ENCODE measurements at regions of chr6 and their contacts with region 1.

Region 1: DNA sequence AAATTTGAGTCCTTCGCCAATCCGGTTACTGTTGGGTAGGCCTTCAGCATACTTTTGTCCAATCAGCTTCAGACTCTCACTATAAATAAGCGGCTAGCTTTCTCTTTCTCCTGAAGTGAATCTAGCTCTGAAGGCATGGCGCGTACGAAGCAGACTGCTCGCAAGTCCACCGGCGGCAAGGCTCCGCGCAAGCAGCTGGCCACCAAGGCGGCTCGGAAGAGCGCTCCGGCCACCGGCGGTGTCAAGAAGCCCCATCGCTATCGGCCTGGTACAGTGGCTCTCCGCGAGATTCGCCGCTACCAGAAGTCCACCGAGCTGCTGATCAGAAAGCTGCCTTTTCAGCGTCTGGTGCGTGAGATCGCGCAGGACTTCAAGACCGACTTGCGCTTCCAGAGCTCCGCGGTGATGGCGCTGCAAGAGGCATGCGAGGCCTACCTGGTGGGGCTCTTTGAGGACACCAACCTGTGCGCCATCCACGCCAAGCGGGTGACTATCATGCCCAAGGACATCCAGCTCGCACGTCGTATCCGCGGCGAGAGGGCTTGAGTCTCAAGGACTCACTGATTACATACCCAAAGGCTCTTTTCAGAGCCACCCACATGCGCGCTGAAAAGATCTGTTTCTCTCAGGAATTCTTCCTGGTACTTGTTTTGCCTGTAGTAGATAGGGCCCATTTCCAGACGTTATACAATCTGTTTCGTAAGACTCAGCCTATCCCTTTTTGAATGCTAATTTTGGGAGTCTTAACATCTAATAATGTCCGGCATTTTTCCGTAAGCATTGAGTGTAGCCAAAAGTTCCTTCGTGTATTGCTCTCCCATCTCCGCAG is 102.0 kb downstream of the OR2B2 start:
- DNase-seq: peak in 1 of 2 experiments; percentile 78
- H3K4me3 ChIP-seq: peak overlapping the region; percentile 78 to 96 (median 89)
- H3K27ac ChIP-seq: peak overlapping the region; percentile 84
- H3K4me1 ChIP-seq: peaks cover 0 to 6% (median 3%) of the 10 kb centered on the region in 4 experiments; a peak in 4 of 7 replicates
- H3K27me3 ChIP-seq: no peaks in the 10 kb centered on the region
- CTCF ChIP-seq: peak in 1 of 3 experiments; percentile 6; a peak in 1 of 4 replicates
- EP300 ChIP-seq: no peak
- POLR2A ChIP-seq: peak; percentile 98 to 100
- RAD21 ChIP-seq: no peak

Region 2: DNA sequence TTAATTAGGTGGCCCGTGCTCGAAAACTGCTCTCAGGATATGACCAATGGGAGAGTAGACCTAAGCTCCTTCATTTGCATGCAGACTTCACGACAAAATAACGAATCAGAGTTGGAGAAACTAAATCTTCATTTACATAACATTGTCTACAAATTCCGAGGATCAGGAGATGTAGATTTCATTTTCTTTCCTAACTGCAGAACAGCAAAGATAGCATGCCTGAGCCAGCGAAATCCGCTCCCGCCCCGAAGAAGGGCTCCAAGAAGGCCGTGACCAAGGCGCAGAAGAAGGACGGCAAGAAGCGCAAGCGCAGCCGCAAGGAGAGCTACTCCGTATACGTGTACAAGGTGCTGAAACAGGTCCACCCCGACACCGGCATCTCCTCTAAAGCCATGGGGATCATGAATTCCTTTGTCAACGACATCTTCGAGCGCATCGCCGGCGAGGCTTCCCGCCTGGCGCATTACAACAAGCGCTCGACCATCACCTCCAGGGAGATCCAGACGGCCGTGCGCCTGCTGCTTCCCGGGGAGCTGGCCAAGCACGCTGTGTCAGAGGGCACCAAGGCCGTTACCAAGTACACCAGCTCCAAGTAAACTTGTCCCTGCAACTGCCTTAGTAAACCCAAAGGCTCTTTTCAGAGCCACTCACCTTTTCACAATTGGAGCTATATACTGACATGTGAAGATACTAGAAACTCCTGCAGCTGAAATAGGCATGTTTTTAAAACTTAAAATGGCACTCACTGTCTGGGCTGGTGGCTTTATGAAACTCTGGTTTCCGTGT is 1626.4 kb before region 1 on chr6:
- CTCF ChIA-PET with region 1: no interaction called
- POLR2A ChIA-PET with region 1: interaction called, 35 read pairs
- DNase-seq: peak in 1 of 2 experiments; percentile 82
- H3K4me3 ChIP-seq: peak overlapping the region; percentile 45 to 73 (median 70)
- H3K27ac ChIP-seq: peak overlapping the region; percentile 97
- H3K4me1 ChIP-seq: peaks cover 0 to 17% (median 8%) of the 10 kb centered on the region in 4 experiments; a peak in 5 of 7 replicates
- H3K27me3 ChIP-seq: no peaks in the 10 kb centered on the region
- CTCF ChIP-seq: no peak
- EP300 ChIP-seq: no peak
- POLR2A ChIP-seq: peak; percentile 94 to 99
- RAD21 ChIP-seq: no peak

Region 3: GRCh38 chr6:26216356-26216885 is 1593.7 kb before region 1 on chr6:
- CTCF ChIA-PET with region 1: no interaction called
- POLR2A ChIA-PET with region 1: interaction called, 52 read pairs
- DNase-seq: no peak
- H3K4me3 ChIP-seq: peak overlapping the region; percentile 87 to 98 (median 90)
- H3K27ac ChIP-seq: peak overlapping the region; percentile 97
- H3K4me1 ChIP-seq: peaks cover 0 to 8% (median 1%) of the 10 kb centered on the region in 4 experiments; a peak in 4 of 7 replicates
- H3K27me3 ChIP-seq: no peaks in the 10 kb centered on the region
- CTCF ChIP-seq: no peak
- EP300 ChIP-seq: no peak
- POLR2A ChIP-seq: peak; percentile 96 to 98
- RAD21 ChIP-seq: no peak

Region 4: GRCh38 chr6:26249957-26250697 is 1560.0 kb before region 1 on chr6:
- CTCF ChIA-PET with region 1: no interaction called
- POLR2A ChIA-PET with region 1: interaction called, 28 read pairs
- DNase-seq: peak in 1 of 2 experiments; percentile 73
- H3K4me3 ChIP-seq: peak overlapping the region; percentile 75 to 98 (median 90)
- H3K27ac ChIP-seq: peak overlapping the region; percentile 97
- H3K4me1 ChIP-seq: peaks cover 0 to 5% (median 4%) of the 10 kb centered on the region in 4 experiments; a peak in 5 of 7 replicates
- H3K27me3 ChIP-seq: no peaks in the 10 kb centered on the region
- CTCF ChIP-seq: peak in 2 of 3 experiments; percentile 23 to 34; a peak in 2 of 4 replicates
- EP300 ChIP-seq: 0 out of 3 replicates have a peak, but pooled peaks of 1 of the 2 experiments have one; percentile 34
- POLR2A ChIP-seq: peak; percentile 98
- RAD21 ChIP-seq: no peak

Region 5: DNA sequence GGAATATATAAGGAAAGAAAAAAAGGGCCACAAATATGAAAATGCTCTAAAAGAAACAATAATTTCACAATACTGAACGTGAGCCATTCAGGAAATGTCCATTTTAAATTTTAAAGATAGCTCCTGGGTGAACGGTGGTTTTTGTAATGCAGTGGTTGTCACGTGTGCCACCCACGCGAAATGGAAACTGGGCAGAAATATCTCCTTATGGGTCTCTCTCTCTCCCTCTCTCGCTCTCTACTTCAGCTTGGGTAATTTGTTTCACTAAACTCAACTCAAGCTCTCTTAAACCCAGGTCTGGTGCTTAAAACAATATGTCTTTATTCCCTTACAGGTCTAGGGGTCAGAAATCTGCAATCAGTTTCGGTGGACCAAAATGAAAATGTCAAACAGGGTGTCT is 48.8 kb before region 1 on chr6:
- CTCF ChIA-PET with region 1: no interaction called
- POLR2A ChIA-PET with region 1: interaction called, 12 read pairs
- DNase-seq: no peak
- H3K4me3 ChIP-seq: peak overlapping the region in 3 of 4 experiments; percentile 16 to 74 (median 40); a peak in 5 of 8 replicates
- H3K27ac ChIP-seq: no peak overlapping the region
- H3K4me1 ChIP-seq: peaks cover 0 to 13% (median 2%) of the 10 kb centered on the region in 4 experiments; a peak in 5 of 7 replicates
- H3K27me3 ChIP-seq: peaks cover 16 to 51% (median 34%) of the 10 kb centered on the region in 4 experiments
- CTCF ChIP-seq: no peak
- EP300 ChIP-seq: no peak
- POLR2A ChIP-seq: no peak
- RAD21 ChIP-seq: no peak

Region 6: GRCh38 chr6:27825025-27825793 is 15.1 kb after region 1 on chr6:
- CTCF ChIA-PET with region 1: interaction called, 8 read pairs
- POLR2A ChIA-PET with region 1: interaction called, 680 read pairs
- DNase-seq: no peak
- H3K4me3 ChIP-seq: peak overlapping the region; percentile 59 to 90 (median 81)
- H3K27ac ChIP-seq: peak overlapping the region; percentile 95; the same call in 1 of the 2 replicates
- H3K4me1 ChIP-seq: peaks cover 0 to 3% (median 0%) of the 10 kb centered on the region in 4 experiments; a peak in 1 of 7 replicates
- H3K27me3 ChIP-seq: no peaks in the 10 kb centered on the region
- CTCF ChIP-seq: no peak
- EP300 ChIP-seq: no peak
- POLR2A ChIP-seq: peak in 1 of 2 experiments; percentile 32; a peak in 2 of 3 replicates
- RAD21 ChIP-seq: no peak

Region 7: GRCh38 chr6:27879837-27880236 is 69.7 kb after region 1 on chr6:
- CTCF ChIA-PET with region 1: no interaction called
- POLR2A ChIA-PET with region 1: interaction called, 959 read pairs
- DNase-seq: peak in 1 of 2 experiments; percentile 28
- H3K4me3 ChIP-seq: no peak overlapping the region
- H3K27ac ChIP-seq: no peak overlapping the region
- H3K4me1 ChIP-seq: peaks cover 0 to 8% (median 2%) of the 10 kb centered on the region in 4 experiments; a peak in 1 of 7 replicates
- H3K27me3 ChIP-seq: no peaks in the 10 kb centered on the region
- CTCF ChIP-seq: no peak
- EP300 ChIP-seq: no peak
- POLR2A ChIP-seq: no peak
- RAD21 ChIP-seq: no peak

Measured in H1 (cell line).